HCT116 (cell line): ENCODE measurements at regions of chr10 and their contacts with region 1.

Region 1: GRCh38 chr10:8700699-8701098 is 646.2 kb downstream of the GATA3 start:
- DNase-seq: no peak
- ATAC-seq: no peak
- H3K4me3 ChIP-seq: no peak overlapping the region
- H3K27ac ChIP-seq: no peak overlapping the region
- H3K4me1 ChIP-seq: no peaks in the 10 kb centered on the region
- H3K27me3 ChIP-seq: no peaks in the 10 kb centered on the region
- CTCF ChIP-seq: no peak
- POLR2A ChIP-seq: no peak
- RAD21 ChIP-seq: no peak

Region 2: DNA sequence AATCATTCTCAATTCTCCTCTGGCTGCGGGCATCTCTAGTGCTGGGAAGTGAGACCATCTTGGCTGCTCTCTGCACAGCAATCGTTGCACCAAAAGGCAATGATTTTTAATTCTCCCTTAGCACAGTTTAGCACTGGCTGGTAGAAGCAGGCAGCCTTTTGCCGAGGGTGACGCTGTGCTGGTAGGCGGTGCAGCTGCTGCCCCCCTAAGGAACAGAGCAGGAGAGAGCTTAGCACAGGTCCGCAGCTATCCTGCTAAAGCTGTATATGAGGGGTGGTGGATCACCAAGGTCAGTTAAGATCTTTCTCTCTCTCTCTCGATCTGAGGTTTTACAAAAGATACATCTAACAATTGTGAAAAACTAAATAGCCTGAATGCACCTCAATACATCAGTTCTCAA is 256.1 kb before region 1 on chr10:
- CTCF ChIA-PET with region 1: no interaction called
- POLR2A ChIA-PET with region 1: no interaction called
- RAD21 ChIA-PET with region 1: no interaction called
- intact Hi-C with region 1: no loop called
- DNase-seq: no peak
- ATAC-seq: no peak
- H3K4me3 ChIP-seq: no peak overlapping the region
- H3K27ac ChIP-seq: no peak overlapping the region
- H3K4me1 ChIP-seq: no peaks in the 10 kb centered on the region
- H3K27me3 ChIP-seq: no peaks in the 10 kb centered on the region
- CTCF ChIP-seq: no peak
- POLR2A ChIP-seq: no peak
- RAD21 ChIP-seq: no peak

Region 3: DNA sequence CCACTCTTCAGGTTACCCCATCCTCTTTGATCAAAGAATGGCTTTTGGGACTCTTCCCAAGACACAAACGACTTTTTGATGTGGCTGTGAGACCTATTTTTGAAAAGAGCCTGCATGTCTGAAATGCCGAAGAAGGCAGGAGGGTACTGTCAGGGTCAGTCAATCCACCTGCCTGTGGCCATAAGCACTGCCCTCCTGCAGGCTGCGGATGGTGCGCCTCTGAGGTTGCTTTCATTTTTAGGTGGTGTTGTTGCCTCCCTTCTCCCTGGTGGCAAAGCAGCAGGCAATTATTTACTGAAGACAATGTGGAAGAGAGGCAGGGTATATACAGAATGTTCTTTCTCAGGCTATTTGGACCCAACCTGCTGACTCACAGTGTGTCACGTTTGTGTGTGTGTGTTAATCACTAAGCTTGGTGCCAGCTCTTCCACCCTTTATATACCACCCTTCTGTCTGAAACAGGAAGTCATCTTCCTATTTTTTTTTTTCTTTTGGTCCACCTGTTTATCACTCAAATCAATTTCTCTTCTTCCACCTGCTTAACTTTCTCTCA is 895.7 kb after region 1 on chr10:
- CTCF ChIA-PET with region 1: no interaction called
- POLR2A ChIA-PET with region 1: no interaction called
- RAD21 ChIA-PET with region 1: no interaction called
- intact Hi-C with region 1: loop called (anchors 5 kb)
- DNase-seq: no peak
- ATAC-seq: no peak
- H3K4me3 ChIP-seq: no peak overlapping the region
- H3K27ac ChIP-seq: no peak overlapping the region
- H3K4me1 ChIP-seq: no peaks in the 10 kb centered on the region
- H3K27me3 ChIP-seq: no peaks in the 10 kb centered on the region
- CTCF ChIP-seq: no peak
- POLR2A ChIP-seq: no peak
- RAD21 ChIP-seq: no peak